ENCODE measurements at regions of chr4 and their contacts with region 1.

Region 1: GRCh38 chr4:113547487-113548042 is 214.0 kb downstream of the CAMK2D start:
- DNase-seq: peak; percentile 87
- H3K4me3 Mint-ChIP-seq: no peak overlapping the region
- H3K27ac Mint-ChIP-seq: peak overlapping the region; percentile 49
- H3K4me1 Mint-ChIP-seq: peaks cover 30% of the 10 kb centered on the region
- H3K27me3 Mint-ChIP-seq: no peaks in the 10 kb centered on the region

Region 2: GRCh38 chr4:113141901-113142346 is 405.6 kb before region 1 on chr4:
- intact Hi-C with region 1: loop called (anchors 10 kb)
- DNase-seq: no peak
- H3K4me3 Mint-ChIP-seq: no peak overlapping the region
- H3K27ac Mint-ChIP-seq: no peak overlapping the region
- H3K4me1 Mint-ChIP-seq: peaks cover 20% of the 10 kb centered on the region
- H3K27me3 Mint-ChIP-seq: peaks cover 9% of the 10 kb centered on the region

Region 3: DNA sequence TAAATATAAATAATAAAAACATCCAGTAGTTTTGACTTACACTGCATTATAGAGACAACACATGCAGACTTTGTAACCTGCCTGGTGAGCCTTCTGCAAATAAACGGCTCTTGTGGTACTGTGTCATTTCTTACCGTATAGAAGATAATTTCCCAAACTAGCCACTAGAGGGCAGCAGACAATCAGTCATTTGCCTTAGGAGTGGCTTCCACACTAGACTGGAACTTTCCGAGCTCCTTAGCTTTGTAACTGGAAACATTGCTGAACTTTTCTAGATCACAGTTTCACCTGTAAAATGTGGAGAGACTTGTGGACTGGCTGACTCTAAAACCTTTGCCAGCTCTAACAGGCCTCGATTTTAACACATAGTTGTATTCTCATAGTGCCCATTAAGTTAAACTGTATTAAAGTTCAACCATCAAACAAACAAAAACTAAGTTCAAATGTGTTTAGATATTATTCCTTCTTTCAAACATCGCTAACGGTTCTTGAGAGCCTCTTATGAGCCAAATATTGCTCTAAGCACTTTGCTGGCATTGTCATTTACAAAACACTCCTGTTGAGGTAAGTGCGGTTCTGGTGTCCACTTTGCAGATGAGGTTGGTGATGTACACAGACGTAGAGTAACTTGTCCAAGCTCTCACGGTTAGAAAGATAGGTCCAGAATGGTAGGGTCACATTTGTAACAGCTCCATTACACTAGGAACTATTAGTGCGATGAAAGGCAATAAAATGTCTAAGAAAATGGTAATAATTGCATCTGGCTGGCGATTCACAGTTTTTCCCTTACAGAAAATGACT is 152.6 kb before region 1 on chr4:
- intact Hi-C with region 1: loop called (anchors 1 kb)
- DNase-seq: peak; percentile 48
- H3K4me3 Mint-ChIP-seq: no peak overlapping the region
- H3K27ac Mint-ChIP-seq: no peak overlapping the region
- H3K4me1 Mint-ChIP-seq: no peaks in the 10 kb centered on the region
- H3K27me3 Mint-ChIP-seq: peaks cover 2% of the 10 kb centered on the region

Region 4: DNA sequence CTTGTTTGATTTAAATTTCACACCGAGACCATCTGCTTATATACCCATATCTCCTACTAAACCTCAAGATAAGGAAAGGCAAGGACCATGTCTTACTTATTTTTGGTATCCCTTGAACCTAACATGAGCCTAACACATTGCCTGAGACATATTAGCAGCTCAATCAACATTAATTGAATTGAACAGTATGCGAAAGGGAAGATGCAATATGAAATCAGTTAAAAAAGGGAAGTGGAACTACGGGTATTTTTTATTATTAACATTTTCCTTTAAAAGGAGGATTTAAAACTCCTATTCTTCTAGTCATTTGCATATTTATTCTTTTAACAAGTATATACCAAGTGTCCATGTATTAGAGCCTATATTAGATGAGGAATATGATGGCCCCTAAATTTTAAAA is 16.9 kb after region 1 on chr4:
- intact Hi-C with region 1: loop called (anchors 2 kb)
- DNase-seq: no peak
- H3K4me3 Mint-ChIP-seq: peak overlapping the region; percentile 25
- H3K27ac Mint-ChIP-seq: no peak overlapping the region
- H3K4me1 Mint-ChIP-seq: peaks cover 44% of the 10 kb centered on the region
- H3K27me3 Mint-ChIP-seq: no peaks in the 10 kb centered on the region

Region 5: DNA sequence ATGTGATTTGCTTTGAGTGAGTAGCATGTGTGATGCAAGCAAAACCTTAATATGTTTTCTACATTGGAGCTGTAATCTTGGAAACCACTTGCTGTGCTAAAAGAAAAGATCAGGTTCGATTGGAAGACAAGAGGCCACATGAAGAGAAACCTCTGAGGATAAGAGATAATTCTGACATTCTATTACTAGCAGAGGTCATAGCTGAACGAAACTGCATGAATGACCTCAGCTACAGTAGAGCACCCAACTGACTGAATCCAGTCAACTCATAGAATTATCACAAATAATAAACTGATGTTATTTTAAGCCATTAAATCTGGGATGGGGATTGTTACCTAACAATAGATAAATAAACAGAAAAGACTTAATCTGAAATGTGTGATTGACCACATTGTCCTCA is 66.8 kb after region 1 on chr4:
- intact Hi-C with region 1: no loop called
- DNase-seq: no peak
- H3K4me3 Mint-ChIP-seq: no peak overlapping the region
- H3K27ac Mint-ChIP-seq: no peak overlapping the region
- H3K4me1 Mint-ChIP-seq: peaks cover 10% of the 10 kb centered on the region
- H3K27me3 Mint-ChIP-seq: no peaks in the 10 kb centered on the region

Region 6: DNA sequence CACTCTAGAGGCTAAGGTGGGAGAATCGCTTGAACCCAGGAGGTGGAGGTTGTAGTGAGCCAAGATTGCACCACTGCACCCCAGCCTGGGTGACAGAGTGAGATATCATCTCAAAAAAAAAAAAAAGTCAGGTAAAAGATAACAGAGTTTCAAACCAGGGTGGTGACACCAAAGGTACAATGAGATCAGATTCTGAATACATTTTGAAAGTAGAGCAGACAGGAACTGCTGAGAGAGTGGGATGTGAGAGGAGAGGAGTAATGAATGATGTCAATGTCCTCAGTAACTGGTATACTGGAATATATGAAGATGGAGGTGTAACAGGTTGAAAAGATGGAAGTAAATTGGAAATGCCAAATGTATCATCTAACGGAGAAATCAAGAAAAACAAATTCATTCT is 78.3 kb after region 1 on chr4:
- intact Hi-C with region 1: loop called (anchors 1 kb)
- DNase-seq: no peak
- H3K4me3 Mint-ChIP-seq: no peak overlapping the region
- H3K27ac Mint-ChIP-seq: peak overlapping the region; percentile 25
- H3K4me1 Mint-ChIP-seq: peaks cover 40% of the 10 kb centered on the region
- H3K27me3 Mint-ChIP-seq: no peaks in the 10 kb centered on the region

Region 7: DNA sequence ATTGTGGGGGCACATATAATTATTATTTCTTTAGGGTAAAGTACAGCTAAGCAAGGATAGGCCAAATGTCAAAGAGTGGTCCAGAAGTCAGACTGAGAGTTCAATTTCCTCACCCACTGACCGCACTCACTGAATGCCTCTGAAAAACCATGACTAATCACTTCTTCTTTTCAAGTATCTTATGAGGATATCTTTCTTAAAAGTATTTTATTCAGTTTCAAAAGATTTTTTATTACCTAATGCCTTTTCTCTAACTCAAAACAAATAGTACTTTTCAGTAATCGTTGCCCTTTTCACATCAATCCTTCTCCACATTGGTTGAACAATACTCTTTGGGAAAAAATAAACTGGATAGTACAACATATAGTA is 275.7 kb after region 1 on chr4:
- intact Hi-C with region 1: loop called (anchors 2 kb)
- DNase-seq: no peak
- H3K4me3 Mint-ChIP-seq: no peak overlapping the region
- H3K27ac Mint-ChIP-seq: no peak overlapping the region
- H3K4me1 Mint-ChIP-seq: peaks cover 38% of the 10 kb centered on the region
- H3K27me3 Mint-ChIP-seq: no peaks in the 10 kb centered on the region

Region 8: DNA sequence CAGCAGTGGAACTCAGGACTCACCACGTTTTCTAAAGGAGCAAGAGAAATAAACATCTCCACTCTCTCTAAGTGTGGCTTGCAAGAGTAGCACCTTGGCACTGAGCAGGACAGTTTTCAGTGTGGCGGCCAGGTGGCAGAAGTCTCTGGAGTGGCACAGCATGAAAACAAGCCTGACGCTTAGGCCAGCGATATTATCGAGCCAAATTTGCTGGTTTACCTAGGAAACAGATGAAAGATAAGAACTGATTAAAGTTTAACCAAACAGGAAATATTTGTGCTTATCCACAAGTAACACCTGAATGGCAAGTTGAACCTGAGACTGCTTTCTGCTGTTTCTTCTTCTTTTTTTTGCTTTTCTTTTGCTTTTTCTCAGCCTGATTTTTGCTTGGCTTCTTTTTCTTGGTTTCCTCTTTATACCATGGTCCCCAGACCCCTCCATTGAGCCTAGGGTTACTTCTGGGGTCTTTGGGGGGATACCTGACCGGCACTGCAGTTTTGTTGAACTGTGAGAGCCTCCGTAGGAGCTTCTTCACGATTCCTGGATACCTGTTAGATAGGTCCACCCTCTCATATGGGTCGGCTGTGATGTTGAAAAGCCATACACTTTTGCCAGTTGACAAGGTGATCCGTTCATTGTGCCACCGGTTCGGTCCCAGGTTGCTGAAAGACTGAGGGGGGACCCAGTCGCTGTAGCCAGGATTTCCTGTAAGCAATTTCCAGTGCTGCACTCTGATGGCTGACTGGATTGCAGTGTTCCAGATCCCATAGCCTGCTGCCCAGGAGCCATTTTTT is 354.6 kb after region 1 on chr4:
- intact Hi-C with region 1: loop called (anchors 5 kb)
- DNase-seq: peak; percentile 10
- H3K4me3 Mint-ChIP-seq: peak overlapping the region; percentile 22
- H3K27ac Mint-ChIP-seq: no peak overlapping the region
- H3K4me1 Mint-ChIP-seq: peaks cover 36% of the 10 kb centered on the region
- H3K27me3 Mint-ChIP-seq: no peaks in the 10 kb centered on the region

Measured in activated T-helper 1 cell treated with anti-CD3 and anti-CD28 coated beads, Interleukin-12 subunit alpha, Interleukin-12 subunit beta, Interleukin-2, Interleukin-4 antibody, amounts not matched to agents 30 ng/mL and 10 ng/mL and 1 ng/mL, durations not matched to agents 14 hours and 24 hours and 36 hours (primary cell).